Psoas muscle (tissue), 8 donors: ENCODE measurements at regions of chr11 and their contacts with region 1.

Region 1: GRCh38 chr11:70521475-70522308 is 123.4 kb downstream of the CTTN start:
- DNase-seq: peak in 1 of 2 donors; percentile 19
- ATAC-seq: no peak
- H3K4me3 ChIP-seq: no peak overlapping the region
- H3K27ac ChIP-seq: no peak overlapping the region
- H3K4me1 ChIP-seq: no peaks in the 10 kb centered on the region
- H3K27me3 ChIP-seq: peaks cover 0 to 37% (median 3%) of the 10 kb centered on the region in 3 donors
- CTCF ChIP-seq: no peak

Region 2: DNA sequence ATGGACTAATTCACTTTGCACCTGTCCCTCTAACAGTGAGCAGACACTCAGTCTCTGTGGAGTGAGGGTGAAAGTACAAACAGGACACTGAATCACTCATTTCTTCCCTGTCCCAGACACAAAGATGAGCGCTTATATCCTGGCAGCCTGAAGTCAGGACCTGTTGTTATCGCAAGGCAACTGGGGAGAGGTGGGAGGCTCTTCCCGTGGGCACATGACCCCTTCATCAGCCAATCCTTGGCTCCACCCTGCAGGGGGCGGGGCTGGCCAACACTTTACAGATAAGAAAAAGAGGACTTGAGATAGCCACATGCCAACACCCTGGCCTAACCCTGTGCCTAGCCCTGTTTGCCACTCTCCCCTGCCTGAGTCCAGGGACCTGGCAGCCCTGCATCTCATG is 1740.9 kb before region 1 on chr11:
- intact Hi-C with region 1: no loop called
- DNase-seq: no peak
- ATAC-seq: no peak
- H3K4me3 ChIP-seq: no peak overlapping the region
- H3K27ac ChIP-seq: no peak overlapping the region
- H3K4me1 ChIP-seq: no peaks in the 10 kb centered on the region
- H3K27me3 ChIP-seq: no peaks in the 10 kb centered on the region
- CTCF ChIP-seq: no peak

Region 3: DNA sequence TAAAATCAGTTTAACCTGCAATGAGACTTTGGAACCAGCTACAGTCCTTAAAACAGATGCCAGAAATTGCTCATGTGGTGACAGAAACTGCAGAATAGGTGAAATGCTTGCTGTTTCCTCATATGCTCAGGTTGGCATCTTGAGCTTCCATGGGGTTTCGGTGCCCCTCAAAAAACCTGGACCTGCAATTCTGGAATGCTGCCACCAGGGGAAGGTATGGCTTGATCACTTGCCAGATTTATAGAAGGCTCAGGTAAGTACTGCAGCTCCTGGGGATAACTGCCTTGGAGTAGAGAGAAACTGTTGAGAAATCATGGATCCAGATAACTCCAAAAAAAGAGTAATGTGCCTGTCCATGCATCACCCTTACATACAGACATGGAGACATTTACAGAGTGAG is 10.4 kb before region 1 on chr11:
- intact Hi-C with region 1: loop called in 1 of 2 experiments (anchors 1 kb)
- DNase-seq: no peak
- ATAC-seq: no peak
- H3K4me3 ChIP-seq: no peak overlapping the region
- H3K27ac ChIP-seq: no peak overlapping the region
- H3K4me1 ChIP-seq: no peaks in the 10 kb centered on the region
- H3K27me3 ChIP-seq: peaks cover 0 to 13% (median 5%) of the 10 kb centered on the region in 3 donors
- CTCF ChIP-seq: no peak

Region 4: GRCh38 chr11:71286701-71287643 is 765.3 kb after region 1 on chr11:
- intact Hi-C with region 1: no loop called
- DNase-seq: no peak
- ATAC-seq: peak in 2 of 4 donors; percentile 39 to 66
- H3K4me3 ChIP-seq: no peak overlapping the region
- H3K27ac ChIP-seq: no peak overlapping the region
- H3K4me1 ChIP-seq: no peaks in the 10 kb centered on the region
- H3K27me3 ChIP-seq: peaks cover 0 to 6% (median under 1%) of the 10 kb centered on the region in 3 donors
- CTCF ChIP-seq: no peak